GM12878 (cell line): ENCODE measurements at regions of chr4 and their contacts with region 1.

Region 1: DNA sequence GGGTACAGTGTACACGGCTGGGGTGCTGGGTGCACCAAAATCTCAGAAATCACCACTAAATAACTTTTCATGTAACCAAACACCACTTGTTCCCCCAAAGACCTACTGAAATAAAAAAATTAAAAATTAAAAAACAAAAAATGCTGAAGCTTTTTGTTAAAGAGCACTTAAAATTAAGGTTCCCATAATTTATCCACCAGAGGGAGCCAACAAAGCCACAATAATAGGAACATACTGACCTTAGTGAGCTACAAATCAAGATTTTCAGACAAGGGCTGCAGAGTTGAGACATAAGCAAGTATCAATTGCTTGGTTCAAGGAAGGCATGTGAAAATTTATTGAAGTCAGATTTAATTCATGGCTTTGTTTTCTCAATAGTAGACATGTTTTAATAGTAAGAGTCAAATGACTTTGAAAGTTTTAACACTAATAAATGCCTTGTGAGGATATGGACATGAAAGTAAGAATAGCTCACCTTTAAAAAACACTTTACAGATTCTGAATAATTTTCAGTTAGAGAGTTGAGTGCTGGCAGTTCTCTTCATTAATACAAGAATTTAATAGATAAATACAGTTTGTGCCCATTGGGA is 43.0 kb upstream of the SCOC start:
- DNase-seq: no peak
- ATAC-seq: no peak
- H3K4me3 ChIP-seq: no peak overlapping the region
- H3K27ac ChIP-seq: no peak overlapping the region
- H3K4me1 ChIP-seq: no peaks in the 10 kb centered on the region
- H3K27me3 ChIP-seq: no peaks in the 10 kb centered on the region
- CTCF ChIP-seq: peak in 2 of 3 experiments; percentile 13 to 39; a peak in 3 of 6 replicates
- EP300 ChIP-seq: no peak
- POLR2A ChIP-seq: no peak
- RAD21 ChIP-seq: peak; percentile 25; the same call in 1 of the 2 replicates

Region 2: DNA sequence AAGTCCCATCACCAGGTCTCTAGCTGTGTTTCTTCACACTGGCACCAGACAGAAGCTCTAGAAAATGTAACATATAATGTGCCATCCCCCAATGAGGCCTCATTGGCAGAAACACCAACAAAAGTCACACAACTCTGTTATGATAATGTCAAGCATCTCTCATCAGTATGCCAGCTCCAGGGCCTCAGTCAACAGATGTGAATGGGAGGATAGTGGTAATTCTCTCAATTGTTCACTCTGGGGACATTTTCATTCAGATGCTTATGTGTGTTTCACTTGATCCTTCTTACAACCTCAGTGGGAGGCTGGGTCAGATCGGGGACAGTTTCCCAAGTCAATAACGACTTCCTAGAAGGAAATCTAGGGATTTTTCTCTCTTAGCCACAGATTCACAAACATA is 14.4 kb before region 1 on chr4:
- CTCF ChIA-PET with region 1: interaction called, 11 read pairs
- POLR2A ChIA-PET with region 1: no interaction called
- RAD21 ChIA-PET with region 1: no interaction called
- SMC1A ChIA-PET with region 1: no interaction called
- in situ Hi-C with region 1: no loop called
- intact Hi-C with region 1: no loop called
- DNase-seq: no peak
- ATAC-seq: no peak
- H3K4me3 ChIP-seq: no peak overlapping the region
- H3K27ac ChIP-seq: no peak overlapping the region
- H3K4me1 ChIP-seq: no peaks in the 10 kb centered on the region
- H3K27me3 ChIP-seq: no peaks in the 10 kb centered on the region; a peak in 1 of 4 replicates
- CTCF ChIP-seq: no peak
- EP300 ChIP-seq: no peak
- POLR2A ChIP-seq: no peak
- RAD21 ChIP-seq: no peak

Region 3: GRCh38 chr4:140609548-140610425 is 279.4 kb after region 1 on chr4:
- CTCF ChIA-PET with region 1: interaction called, 10 read pairs
- POLR2A ChIA-PET with region 1: no interaction called
- RAD21 ChIA-PET with region 1: no interaction called
- SMC1A ChIA-PET with region 1: interaction called, 4 read pairs
- in situ Hi-C with region 1: no loop called
- intact Hi-C with region 1: no loop called
- DNase-seq: peak; percentile 19
- ATAC-seq: peak; percentile 91
- H3K4me3 ChIP-seq: no peak overlapping the region
- H3K27ac ChIP-seq: no peak overlapping the region
- H3K4me1 ChIP-seq: no peaks in the 10 kb centered on the region
- H3K27me3 ChIP-seq: no peaks in the 10 kb centered on the region
- CTCF ChIP-seq: peak; percentile 39 to 68 (median 52); a peak in 5 of 6 replicates
- EP300 ChIP-seq: no peak
- POLR2A ChIP-seq: no peak
- RAD21 ChIP-seq: peak; percentile 85